Activated B cell treated with CpG ODN at 0.5 μM for 24 hours (primary cell): ENCODE measurements at regions of chr7 and their contacts with region 1.

Region 1: GRCh38 chr7:127253281-127254162 is 781 bp upstream of the GRM8 start:
- DNase-seq: peak; percentile 58
- ATAC-seq: peak; percentile 88
- H3K4me3 Mint-ChIP-seq: peak overlapping the region; percentile 88
- H3K27ac Mint-ChIP-seq: no peak overlapping the region
- H3K4me1 Mint-ChIP-seq: peaks cover 25% of the 10 kb centered on the region
- H3K27me3 Mint-ChIP-seq: peaks cover 67% of the 10 kb centered on the region
- CTCF ChIP-seq: peak; percentile 54

Region 2: GRCh38 chr7:126803060-126803665 is 450.4 kb before region 1 on chr7:
- CTCF ChIA-PET with region 1: interaction called, 5 read pairs
- POLR2A ChIA-PET with region 1: no interaction called
- intact Hi-C with region 1: loop called (anchors 1 kb)
- DNase-seq: no peak
- ATAC-seq: no peak
- H3K4me3 Mint-ChIP-seq: no peak overlapping the region
- H3K27ac Mint-ChIP-seq: no peak overlapping the region
- H3K4me1 Mint-ChIP-seq: no peaks in the 10 kb centered on the region
- H3K27me3 Mint-ChIP-seq: no peaks in the 10 kb centered on the region
- CTCF ChIP-seq: no peak

Region 3: DNA sequence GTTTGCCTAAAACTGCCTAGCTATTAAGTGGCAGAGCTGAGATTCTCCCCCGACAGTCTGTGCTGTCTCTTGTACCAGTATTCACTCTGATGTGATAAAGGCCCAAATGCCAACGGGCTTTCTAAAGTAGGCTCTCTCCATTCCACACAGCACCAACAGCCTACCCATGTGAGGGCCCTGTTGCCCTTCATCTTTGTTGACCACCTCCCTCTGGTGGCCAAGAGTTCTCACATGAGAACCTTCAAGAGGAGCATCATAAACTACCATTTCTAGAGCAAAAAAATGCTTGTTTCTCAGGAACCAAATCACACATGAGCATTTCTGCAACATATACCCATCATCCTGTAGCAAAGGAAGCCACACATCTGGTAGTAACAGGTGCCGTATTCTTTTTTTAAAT is 186.5 kb before region 1 on chr7:
- CTCF ChIA-PET with region 1: no interaction called
- POLR2A ChIA-PET with region 1: no interaction called
- intact Hi-C with region 1: no loop called
- DNase-seq: no peak
- ATAC-seq: no peak
- H3K4me3 Mint-ChIP-seq: no peak overlapping the region
- H3K27ac Mint-ChIP-seq: no peak overlapping the region
- H3K4me1 Mint-ChIP-seq: no peaks in the 10 kb centered on the region
- H3K27me3 Mint-ChIP-seq: no peaks in the 10 kb centered on the region
- CTCF ChIP-seq: no peak

Region 4: GRCh38 chr7:127751490-127752448 is 498.2 kb after region 1 on chr7:
- CTCF ChIA-PET with region 1: no interaction called
- POLR2A ChIA-PET with region 1: no interaction called
- intact Hi-C with region 1: no loop called
- DNase-seq: no peak
- ATAC-seq: no peak
- H3K4me3 Mint-ChIP-seq: no peak overlapping the region
- H3K27ac Mint-ChIP-seq: no peak overlapping the region
- H3K4me1 Mint-ChIP-seq: peaks cover 38% of the 10 kb centered on the region
- H3K27me3 Mint-ChIP-seq: no peaks in the 10 kb centered on the region
- CTCF ChIP-seq: no peak